Activated CD4-positive, alpha-beta memory T cell treated with anti-CD3 and anti-CD28 coated beads, Interleukin-2, amount 10 ng/mL, durations not matched to agents 7 days and 5 days (primary cell): ENCODE measurements at regions of chr2 and their contacts with region 1.

Region 1: GRCh38 chr2:157876066-157876787 is at the start of gene ACVR1:
- DNase-seq: peak; percentile 87
- H3K4me3 Mint-ChIP-seq: peak within 1 kb of the TSS; percentile 91
- H3K27ac Mint-ChIP-seq: peak within 1 kb of the TSS; percentile 78
- H3K4me1 Mint-ChIP-seq: peaks cover 58% of the 10 kb centered on the region
- H3K27me3 Mint-ChIP-seq: no peaks in the 10 kb centered on the region
- total RNA-seq, gene ACVR1: 24.2 to 27.6 TPM

Region 2: DNA sequence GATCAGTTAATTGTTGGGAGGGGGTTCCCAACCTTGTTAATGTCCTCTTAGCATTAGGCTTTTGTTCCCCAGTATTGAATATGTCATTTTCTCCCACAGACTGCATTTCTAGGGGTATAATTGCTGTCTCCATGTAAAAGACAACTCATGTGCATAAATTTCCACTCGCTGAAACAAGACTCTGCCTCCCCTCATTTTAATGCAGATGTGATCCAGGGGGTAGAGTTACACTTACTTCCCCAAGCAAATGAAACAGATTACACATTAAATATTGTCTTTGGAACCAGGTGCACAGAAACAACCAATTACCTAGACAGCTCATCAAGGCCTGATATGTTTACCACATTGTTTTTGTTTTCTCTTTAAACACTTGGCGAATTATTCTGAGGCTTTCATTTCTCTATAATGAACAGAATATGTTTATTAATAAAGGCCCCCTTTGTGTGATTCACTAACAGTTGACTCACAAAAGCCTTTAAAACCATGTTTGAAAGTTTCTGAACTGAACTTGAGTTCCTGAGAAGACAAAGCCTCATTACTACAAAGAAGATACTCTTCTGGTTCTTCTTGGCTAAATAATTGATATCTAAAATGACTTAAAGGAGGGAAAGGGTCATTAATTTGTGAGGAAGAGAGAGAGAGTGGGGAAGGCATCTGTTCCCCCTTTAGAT is 14.9 kb after region 1 on chr2:
- CTCF ChIA-PET with region 1: interaction called, 58 read pairs
- POLR2A ChIA-PET with region 1: interaction called, 257 read pairs
- DNase-seq: no peak
- H3K4me3 Mint-ChIP-seq: peak overlapping the region; percentile 24
- H3K27ac Mint-ChIP-seq: peak overlapping the region; percentile 79
- H3K4me1 Mint-ChIP-seq: peaks cover 54% of the 10 kb centered on the region
- H3K27me3 Mint-ChIP-seq: peaks cover 4% of the 10 kb centered on the region

Region 3: DNA sequence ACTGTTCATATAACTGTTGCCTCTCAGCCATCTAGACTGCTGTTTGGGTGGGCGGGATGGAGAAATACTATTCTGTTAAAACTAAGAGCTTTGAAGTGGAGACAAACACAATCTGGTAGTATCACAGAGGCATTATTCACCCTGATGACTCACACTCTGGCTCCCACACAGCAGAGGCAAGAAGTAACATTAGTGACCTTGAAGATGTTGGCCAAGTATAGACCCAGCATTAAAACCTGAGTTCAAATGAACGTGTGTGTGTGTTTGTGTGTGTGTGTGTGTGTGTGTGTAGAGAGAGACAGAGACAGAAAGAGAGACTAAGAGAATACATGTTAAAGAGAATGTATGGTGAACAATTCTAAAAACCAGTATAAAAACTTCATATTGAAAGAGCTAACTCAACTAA is 22.4 kb after region 1 on chr2:
- CTCF ChIA-PET with region 1: interaction called, 58 read pairs
- POLR2A ChIA-PET with region 1: interaction called, 257 read pairs
- DNase-seq: peak; percentile 61
- H3K4me3 Mint-ChIP-seq: peak overlapping the region; percentile 81
- H3K27ac Mint-ChIP-seq: peak overlapping the region; percentile 99
- H3K4me1 Mint-ChIP-seq: peaks cover 80% of the 10 kb centered on the region
- H3K27me3 Mint-ChIP-seq: no peaks in the 10 kb centered on the region

Region 4: GRCh38 chr2:158006961-158007719 is 130.9 kb after region 1 on chr2:
- CTCF ChIA-PET with region 1: interaction called, 4 read pairs
- POLR2A ChIA-PET with region 1: interaction called, 13 read pairs
- DNase-seq: no peak
- H3K4me3 Mint-ChIP-seq: no peak overlapping the region
- H3K27ac Mint-ChIP-seq: no peak overlapping the region
- H3K4me1 Mint-ChIP-seq: peaks cover 15% of the 10 kb centered on the region
- H3K27me3 Mint-ChIP-seq: peaks cover 1% of the 10 kb centered on the region